Caco-2 (cell line): ENCODE measurements at regions of chr11 and their contacts with region 1.

Region 1: GRCh38 chr11:86523738-86524619 is 148.4 kb downstream of the ME3 start:
- DNase-seq: peak; percentile 89 to 91
- H3K4me3 ChIP-seq: no peak overlapping the region
- H3K4me3 Mint-ChIP-seq: peak overlapping the region; percentile 38
- H3K27ac Mint-ChIP-seq: peak overlapping the region; percentile 88
- H3K4me1 ChIP-seq: peaks cover 57% of the 10 kb centered on the region
- H3K4me1 Mint-ChIP-seq: peaks cover 45% of the 10 kb centered on the region
- H3K27me3 ChIP-seq: no peaks in the 10 kb centered on the region
- H3K27me3 Mint-ChIP-seq: no peaks in the 10 kb centered on the region
- CTCF ChIP-seq: no peak

Region 2: DNA sequence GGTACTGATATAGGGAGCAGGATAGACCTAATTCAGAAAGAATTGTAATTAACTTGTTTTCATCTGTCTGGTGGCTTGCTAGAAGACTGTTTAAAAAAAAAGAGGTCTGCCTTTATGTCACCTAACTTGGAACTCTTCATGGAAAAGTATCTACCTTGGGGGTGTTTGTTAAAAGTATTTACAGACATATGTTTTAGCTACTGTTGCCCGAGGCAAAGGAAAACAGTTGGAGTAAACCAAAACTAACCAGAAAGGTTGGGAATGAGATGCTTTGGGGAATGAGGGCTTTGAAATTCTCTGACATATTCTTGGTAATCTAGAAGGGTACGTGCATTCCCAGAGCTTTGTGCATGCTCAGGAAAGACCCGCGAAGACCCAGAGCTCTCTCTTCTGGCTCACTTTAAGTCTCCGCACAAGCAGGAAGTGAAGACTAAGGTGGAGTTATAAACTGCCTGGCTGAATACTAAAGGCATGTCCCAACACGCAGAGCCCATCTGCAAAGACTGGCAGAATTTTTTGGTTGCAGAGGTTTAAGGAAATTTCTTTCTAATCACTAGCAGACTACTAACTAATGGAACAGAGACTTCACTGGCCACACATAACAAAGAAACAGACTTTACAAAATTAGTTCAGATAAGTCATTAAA is 188.7 kb before region 1 on chr11:
- CTCF ChIA-PET with region 1: no interaction called
- POLR2A ChIA-PET with region 1: no interaction called
- intact Hi-C with region 1: no loop called
- DNase-seq: no peak
- H3K4me3 ChIP-seq: no peak overlapping the region
- H3K4me3 Mint-ChIP-seq: no peak overlapping the region
- H3K27ac Mint-ChIP-seq: no peak overlapping the region
- H3K4me1 ChIP-seq: no peaks in the 10 kb centered on the region
- H3K4me1 Mint-ChIP-seq: no peaks in the 10 kb centered on the region
- H3K27me3 ChIP-seq: no peaks in the 10 kb centered on the region
- H3K27me3 Mint-ChIP-seq: no peaks in the 10 kb centered on the region
- CTCF ChIP-seq: no peak

Region 3: DNA sequence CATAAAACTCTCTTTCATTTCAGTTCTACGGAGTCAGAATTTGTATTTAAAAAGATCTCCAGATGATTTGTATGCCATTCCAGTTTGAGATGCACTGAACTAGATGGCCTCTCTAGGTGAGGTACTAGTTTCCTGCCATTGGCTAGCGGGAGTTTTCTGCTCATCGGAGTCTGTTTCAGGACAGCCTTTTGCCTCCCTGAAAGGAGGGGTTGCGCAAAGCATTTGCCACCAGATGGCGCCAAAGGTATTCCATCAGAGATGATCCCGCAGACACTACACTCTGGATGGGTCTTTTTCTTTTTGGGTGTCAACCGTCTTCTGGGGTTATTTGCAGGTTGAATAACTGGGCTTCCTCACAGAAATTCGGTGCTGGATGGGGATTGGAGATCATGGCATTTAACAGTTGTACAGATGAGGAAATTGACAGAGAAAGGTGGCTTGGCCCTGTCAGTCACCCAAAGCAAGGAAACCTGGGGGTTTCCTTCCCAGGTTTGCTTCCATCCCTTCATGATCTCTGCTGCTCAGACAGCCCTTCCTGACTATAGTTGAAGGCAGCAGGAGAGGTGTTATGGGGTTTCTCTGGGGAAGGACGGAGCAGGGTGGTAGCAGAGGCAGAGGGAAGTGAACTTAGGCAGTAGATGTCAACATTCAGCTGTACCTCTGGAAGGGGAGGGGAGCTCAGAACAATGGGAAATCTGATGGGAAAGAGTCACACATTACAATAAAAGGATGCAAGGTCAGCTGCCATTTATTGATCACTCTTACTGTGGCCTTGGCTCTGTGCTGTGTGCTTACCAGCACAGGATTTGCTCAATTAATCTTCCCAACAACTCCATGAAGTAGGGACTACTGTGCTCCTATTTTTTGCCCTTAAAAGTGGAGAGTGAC is 67.7 kb before region 1 on chr11:
- CTCF ChIA-PET with region 1: interaction called, 3 read pairs
- POLR2A ChIA-PET with region 1: no interaction called
- intact Hi-C with region 1: loop called (anchors 1 kb)
- DNase-seq: peak; percentile 91 to 93
- H3K4me3 ChIP-seq: no peak overlapping the region
- H3K4me3 Mint-ChIP-seq: no peak overlapping the region
- H3K27ac Mint-ChIP-seq: peak overlapping the region; percentile 65
- H3K4me1 ChIP-seq: peaks cover 29% of the 10 kb centered on the region
- H3K4me1 Mint-ChIP-seq: peaks cover 41% of the 10 kb centered on the region
- H3K27me3 ChIP-seq: no peaks in the 10 kb centered on the region
- H3K27me3 Mint-ChIP-seq: no peaks in the 10 kb centered on the region
- CTCF ChIP-seq: peak; percentile 98

Region 4: GRCh38 chr11:86469491-86470393 is 54.2 kb before region 1 on chr11:
- CTCF ChIA-PET with region 1: no interaction called
- POLR2A ChIA-PET with region 1: interaction called, 3 read pairs
- intact Hi-C with region 1: loop called (anchors 1 kb)
- DNase-seq: peak; percentile 89 to 91
- H3K4me3 ChIP-seq: no peak overlapping the region
- H3K4me3 Mint-ChIP-seq: peak overlapping the region; percentile 36
- H3K27ac Mint-ChIP-seq: peak overlapping the region; percentile 70
- H3K4me1 ChIP-seq: peaks cover 44% of the 10 kb centered on the region
- H3K4me1 Mint-ChIP-seq: peaks cover 58% of the 10 kb centered on the region
- H3K27me3 ChIP-seq: no peaks in the 10 kb centered on the region
- H3K27me3 Mint-ChIP-seq: no peaks in the 10 kb centered on the region
- CTCF ChIP-seq: no peak

Region 5: GRCh38 chr11:86483940-86484794 is 39.8 kb before region 1 on chr11:
- CTCF ChIA-PET with region 1: interaction called, 5 read pairs
- POLR2A ChIA-PET with region 1: interaction called, 3 read pairs
- intact Hi-C with region 1: loop called (anchors 1 kb)
- DNase-seq: peak; percentile 90 to 93
- H3K4me3 ChIP-seq: no peak overlapping the region
- H3K4me3 Mint-ChIP-seq: peak overlapping the region; percentile 1
- H3K27ac Mint-ChIP-seq: peak overlapping the region; percentile 77
- H3K4me1 ChIP-seq: peaks cover 54% of the 10 kb centered on the region
- H3K4me1 Mint-ChIP-seq: peaks cover 57% of the 10 kb centered on the region
- H3K27me3 ChIP-seq: no peaks in the 10 kb centered on the region
- H3K27me3 Mint-ChIP-seq: no peaks in the 10 kb centered on the region
- CTCF ChIP-seq: no peak

Region 6: DNA sequence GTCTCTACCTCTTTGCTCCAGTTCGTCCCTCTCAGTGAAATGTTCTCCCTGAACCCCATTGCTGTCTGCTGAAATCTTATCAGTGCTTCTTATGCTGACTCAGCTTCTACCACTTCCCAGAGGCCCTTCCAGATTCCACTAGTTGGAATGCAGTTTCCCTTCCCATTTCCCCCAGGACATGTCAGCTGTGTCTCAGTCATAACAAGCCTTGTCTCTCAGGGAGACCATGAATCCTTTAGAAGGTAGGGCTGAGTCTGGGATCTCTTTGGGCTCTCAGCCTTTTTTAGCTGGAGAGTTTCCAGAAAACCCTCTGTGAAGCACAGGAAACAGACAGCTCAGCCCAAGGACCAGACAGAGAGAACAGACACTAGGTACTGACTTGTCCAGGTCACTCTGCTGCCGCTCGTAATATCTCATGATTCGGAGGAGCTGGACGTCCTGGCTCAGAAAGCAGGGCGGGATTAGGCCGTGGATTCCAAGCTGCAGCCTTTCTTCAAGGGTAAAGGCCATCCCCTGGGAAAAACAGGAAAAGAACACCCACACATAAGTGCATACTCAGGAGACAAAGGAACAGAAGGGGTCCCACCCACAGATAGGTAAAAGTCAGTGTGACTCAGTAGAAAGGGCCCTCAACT is 35.4 kb after region 1 on chr11:
- CTCF ChIA-PET with region 1: no interaction called
- POLR2A ChIA-PET with region 1: no interaction called
- intact Hi-C with region 1: loop called (anchors 2 kb)
- DNase-seq: peak; percentile 66 to 75
- H3K4me3 ChIP-seq: no peak overlapping the region
- H3K4me3 Mint-ChIP-seq: no peak overlapping the region
- H3K27ac Mint-ChIP-seq: peak overlapping the region; percentile 66
- H3K4me1 ChIP-seq: peaks cover 19% of the 10 kb centered on the region
- H3K4me1 Mint-ChIP-seq: peaks cover 25% of the 10 kb centered on the region
- H3K27me3 ChIP-seq: no peaks in the 10 kb centered on the region
- H3K27me3 Mint-ChIP-seq: no peaks in the 10 kb centered on the region
- CTCF ChIP-seq: no peak